ENCODE measurements at regions of chr1 and their contacts with region 1.

Region 1: GRCh38 chr1:100249537-100250257 is at the start of gene DBT:
- DNase-seq: peak; percentile 97
- H3K4me3 ChIP-seq: peak within 1 kb of the TSS; percentile 69 to 90
- H3K27ac ChIP-seq: peak within 1 kb of the TSS; percentile 84 to 85
- H3K4me1 ChIP-seq: no peaks in the 10 kb centered on the region
- H3K27me3 ChIP-seq: no peaks in the 10 kb centered on the region
- CTCF ChIP-seq: peak in 1 of 4 experiments; percentile 18
- POLR2A ChIP-seq: peak; percentile 81
- total RNA-seq, gene DBT: 7.6 to 17.3 TPM

Region 2: DNA sequence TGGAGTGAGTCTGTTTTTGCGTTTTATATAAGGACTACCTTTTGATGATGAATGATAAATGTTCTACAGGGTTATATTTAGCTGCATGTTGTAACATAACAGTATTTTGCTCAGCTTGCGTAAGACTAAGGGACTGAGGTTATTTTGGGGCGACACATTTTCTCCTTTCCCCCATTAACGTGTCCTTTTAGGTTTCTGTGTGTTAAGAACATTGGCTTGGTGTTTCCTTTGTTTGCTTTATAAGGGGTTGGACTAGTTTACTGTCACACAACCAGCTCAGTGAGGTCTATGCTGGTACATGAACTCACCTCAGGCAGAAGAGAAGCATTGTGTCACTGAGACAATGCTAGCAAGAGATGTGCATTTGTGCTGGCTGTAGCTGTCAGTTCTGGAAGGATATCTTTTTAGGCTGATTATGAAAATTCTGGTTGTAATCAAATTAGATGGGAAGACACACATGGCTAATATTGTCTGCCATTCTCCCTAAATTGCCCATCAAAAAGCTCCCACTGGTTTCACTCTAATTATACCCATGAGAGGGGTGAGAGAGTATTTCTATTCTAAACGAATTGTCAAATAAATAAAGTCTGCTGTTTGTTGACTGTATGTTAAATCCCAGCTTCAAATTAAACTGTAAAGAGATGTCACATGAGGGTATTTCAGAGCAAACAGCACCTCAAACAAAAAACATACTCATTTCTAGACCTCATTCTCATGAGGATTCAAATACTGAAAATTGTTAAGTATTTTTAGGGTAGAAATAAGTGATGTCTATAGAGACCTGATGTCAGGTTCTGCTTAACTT is 165.2 kb after region 1 on chr1:
- intact Hi-C with region 1: no loop called
- DNase-seq: peak; percentile 68
- H3K4me3 ChIP-seq: no peak overlapping the region
- H3K27ac ChIP-seq: peak overlapping the region; percentile 78 to 79
- H3K4me1 ChIP-seq: peaks cover 14% of the 10 kb centered on the region
- H3K27me3 ChIP-seq: no peaks in the 10 kb centered on the region
- CTCF ChIP-seq: no peak
- POLR2A ChIP-seq: no peak

Region 3: DNA sequence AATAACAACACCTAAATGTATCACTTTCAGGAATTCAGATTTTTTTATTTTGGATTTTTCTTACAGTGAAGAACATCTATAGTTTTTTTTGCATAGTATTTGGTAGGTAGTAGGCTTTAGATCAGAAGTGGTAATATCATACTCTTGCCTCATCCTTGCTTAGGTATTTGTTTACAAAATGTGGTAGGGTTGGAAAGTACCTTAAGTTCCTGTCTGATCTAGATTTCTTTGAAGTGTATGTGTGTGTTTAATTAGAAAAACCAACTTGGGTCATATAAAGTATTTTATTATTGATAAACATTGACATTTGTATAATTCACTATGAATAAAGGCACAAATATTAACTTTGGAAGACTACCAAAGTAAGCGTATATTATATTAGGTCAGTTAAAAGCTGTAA is 202.9 kb after region 1 on chr1:
- intact Hi-C with region 1: loop called (anchors 5 kb)
- DNase-seq: no peak
- H3K4me3 ChIP-seq: no peak overlapping the region
- H3K27ac ChIP-seq: peak overlapping the region in 1 of 2 donors; percentile 37
- H3K4me1 ChIP-seq: peaks cover 5% of the 10 kb centered on the region
- H3K27me3 ChIP-seq: no peaks in the 10 kb centered on the region
- CTCF ChIP-seq: no peak
- POLR2A ChIP-seq: no peak

Measured in prostate gland (tissue), 2 donors.